ENCODE measurements at regions of chr14 and their contacts with region 1.

Region 1: GRCh38 chr14:23320774-23321571 is at the start of gene PABPN1:
- DNase-seq: peak; percentile 92

Region 2: DNA sequence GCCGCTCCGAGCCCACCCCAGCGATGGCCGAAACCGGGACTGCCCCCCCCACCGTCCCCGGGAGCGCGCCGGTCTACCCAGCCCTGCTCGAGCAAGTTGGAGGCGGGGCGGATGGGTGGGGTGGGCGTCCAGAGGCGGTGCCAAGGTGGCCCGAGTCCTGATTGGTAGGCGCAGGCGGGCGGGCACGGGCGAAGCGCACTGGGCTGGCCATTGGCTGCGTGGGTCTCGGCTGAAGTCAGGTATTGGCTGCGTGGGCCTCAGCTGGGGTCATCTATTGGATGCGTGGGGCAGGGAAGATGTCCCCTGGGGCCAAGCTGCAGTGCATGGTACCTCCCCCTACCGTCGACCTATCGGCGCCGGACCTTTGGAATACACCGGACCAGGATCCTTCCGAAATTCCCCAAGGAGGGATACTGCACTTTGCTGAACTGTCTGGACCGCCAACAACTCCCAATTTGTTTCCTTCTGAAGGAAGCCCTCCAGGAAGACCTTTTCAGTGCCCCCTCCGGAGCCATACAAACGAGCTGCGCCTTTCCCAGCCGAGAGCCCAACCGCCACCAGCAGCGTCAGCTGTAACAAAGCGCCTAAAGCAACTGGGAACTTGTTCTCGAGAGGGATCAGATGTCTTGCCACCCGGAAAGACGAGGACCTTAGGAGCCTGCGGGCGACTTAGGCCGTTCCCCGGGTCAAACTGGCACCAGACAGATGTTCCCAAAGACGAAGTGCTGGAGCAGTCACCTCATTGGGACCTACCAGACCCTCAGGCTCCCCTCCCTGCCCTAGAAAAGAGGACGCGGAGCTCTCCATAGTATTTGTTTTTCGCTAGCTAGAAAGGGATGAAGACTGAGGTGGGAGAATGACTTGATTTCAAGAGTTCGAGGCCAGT is 34.7 kb before region 1 on chr14 and contains the start of gene HOMEZ:
- CTCF ChIA-PET with region 1: no interaction called
- POLR2A ChIA-PET with region 1: interaction called, 33 read pairs
- DNase-seq: peak; percentile 92

Region 3: DNA sequence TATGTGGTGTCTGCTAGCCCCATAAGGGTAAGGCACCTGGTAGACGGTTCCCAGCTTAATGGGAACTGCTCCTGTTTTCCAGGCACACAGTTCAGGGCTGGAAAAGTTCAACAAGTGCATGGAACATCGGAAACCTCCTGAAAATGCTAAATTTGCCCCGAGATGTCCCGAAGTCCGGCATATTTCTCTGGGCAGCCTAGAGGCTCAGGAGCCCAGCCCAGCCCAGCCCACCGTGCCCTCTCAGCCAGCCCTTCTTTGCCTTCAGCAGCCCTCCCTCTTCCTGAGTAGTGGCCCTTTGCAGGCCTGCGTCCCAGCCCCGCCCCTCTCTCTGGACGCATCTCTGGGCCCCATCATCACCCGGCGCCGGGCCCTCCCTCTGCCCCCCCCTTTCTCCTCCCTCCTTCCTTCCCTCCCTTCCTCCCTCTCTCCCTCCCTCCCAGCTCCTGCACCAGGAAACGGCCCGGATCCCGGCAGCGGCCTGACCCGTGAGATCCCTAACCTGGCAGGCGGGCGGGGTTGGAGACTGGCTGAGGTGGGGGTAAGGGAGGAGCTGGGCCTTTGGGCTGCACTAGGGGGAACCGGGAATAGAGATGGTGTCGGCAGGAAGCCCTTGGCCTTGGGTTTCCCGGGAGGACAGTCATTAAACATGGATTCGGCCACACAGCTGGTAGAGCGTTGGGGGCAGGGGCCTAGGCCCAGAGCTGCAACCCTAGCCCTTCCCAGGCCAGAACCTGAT is 14.4 kb before region 1 on chr14 and contains the start of gene BCL2L2:
- CTCF ChIA-PET with region 1: interaction called, 8 read pairs
- POLR2A ChIA-PET with region 1: interaction called, 256 read pairs
- DNase-seq: peak; percentile 74

Region 4: GRCh38 chr14:23352511-23353432 is 31.8 kb after region 1 on chr14 and contains the start of gene SLC22A17:
- CTCF ChIA-PET with region 1: no interaction called
- POLR2A ChIA-PET with region 1: interaction called, 18 read pairs
- DNase-seq: peak; percentile 74

Region 5: DNA sequence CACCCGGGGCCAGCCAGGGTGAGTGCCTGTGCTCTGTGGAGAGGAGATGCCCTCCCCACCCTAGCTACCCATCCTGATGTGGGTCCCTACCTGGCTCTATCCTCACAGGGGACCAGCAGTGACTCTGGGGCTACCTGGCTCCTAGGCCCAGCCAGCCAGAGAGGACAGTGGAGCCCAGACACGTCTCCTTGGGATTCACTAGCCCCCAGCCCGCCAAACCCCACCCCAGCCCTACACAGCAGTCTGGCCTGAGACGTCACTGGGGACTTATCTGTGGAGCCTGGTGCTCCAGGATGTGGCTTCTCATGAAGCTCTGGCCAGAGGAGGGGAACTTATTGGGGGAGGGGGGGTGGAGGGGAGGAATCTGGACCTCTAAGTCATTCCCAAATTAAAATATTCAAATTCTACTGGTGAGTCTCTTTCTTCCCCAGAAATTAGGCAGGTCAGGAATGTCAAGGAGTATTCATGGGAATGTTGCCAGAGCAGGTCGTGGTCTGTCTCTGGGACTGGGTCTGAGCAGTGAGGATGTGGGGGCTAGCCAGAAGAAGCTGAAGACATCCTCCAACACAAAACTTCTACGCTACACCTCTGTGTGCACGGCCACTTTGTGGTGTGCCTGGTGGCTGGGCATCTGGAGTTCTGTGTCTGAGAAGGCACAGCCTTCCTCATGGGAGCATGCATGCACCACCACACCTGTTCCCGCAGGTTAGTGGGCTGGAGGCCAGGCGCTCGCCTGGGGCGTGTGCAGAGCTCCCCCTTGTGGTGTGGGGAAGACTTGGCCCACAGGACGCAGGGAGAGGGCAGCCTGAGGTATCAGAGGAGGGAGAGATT is 58.6 kb after region 1 on chr14:
- CTCF ChIA-PET with region 1: interaction called, 24 read pairs
- POLR2A ChIA-PET with region 1: interaction called, 10 read pairs
- DNase-seq: peak; percentile 80